Sigmoid colon (tissue), 7 donors: ENCODE measurements at regions of chr16 and their contacts with region 1.

Region 1: GRCh38 chr16:30355144-30355894 is at the start of gene CD2BP2:
- DNase-seq: peak; percentile 99
- H3K4me3 ChIP-seq: peak within 1 kb of the TSS; percentile 59 to 96 (median 81)
- H3K27ac ChIP-seq: peak within 1 kb of the TSS; percentile 93 to 99 (median 96)
- H3K4me1 ChIP-seq: peaks cover 0 to 58% (median 50%) of the 10 kb centered on the region in 4 donors
- H3K27me3 ChIP-seq: no peaks in the 10 kb centered on the region
- CTCF ChIP-seq: no peak
- EP300 ChIP-seq: peak in 2 of 4 donors; percentile 23 to 30
- POLR2A ChIP-seq: peak in 1 of 2 donors; percentile 27
- total RNA-seq, gene CD2BP2: 29.9 to 57.3 (median 43.0) TPM

Region 2: GRCh38 chr16:30335598-30336474 is 19.5 kb before region 1 on chr16:
- intact Hi-C with region 1: loop called (anchors 1 kb)
- DNase-seq: peak; percentile 70
- H3K4me3 ChIP-seq: peak overlapping the region; percentile 69 to 98 (median 72)
- H3K27ac ChIP-seq: peak overlapping the region; percentile 94 to 99 (median 96)
- H3K4me1 ChIP-seq: peaks cover 0 to 7% (median 6%) of the 10 kb centered on the region in 4 donors
- H3K27me3 ChIP-seq: no peaks in the 10 kb centered on the region
- CTCF ChIP-seq: no peak
- EP300 ChIP-seq: no peak
- POLR2A ChIP-seq: no peak

Region 3: GRCh38 chr16:30370444-30371247 is 15.3 kb after region 1 on chr16 and contains the start of gene TBC1D10B:
- intact Hi-C with region 1: loop called (anchors 1 kb)
- DNase-seq: peak; percentile 100
- H3K4me3 ChIP-seq: peak within 1 kb of the TSS; percentile 62 to 99 (median 96)
- H3K27ac ChIP-seq: peak within 1 kb of the TSS; percentile 85 to 94 (median 90)
- H3K4me1 ChIP-seq: peaks cover 0 to 49% (median 42%) of the 10 kb centered on the region in 4 donors
- H3K27me3 ChIP-seq: no peaks in the 10 kb centered on the region
- CTCF ChIP-seq: no peak
- EP300 ChIP-seq: no peak
- POLR2A ChIP-seq: peak in 1 of 2 donors; percentile 20
- total RNA-seq, gene TBC1D10B: 14.5 to 25.2 (median 19.2) TPM

Region 4: DNA sequence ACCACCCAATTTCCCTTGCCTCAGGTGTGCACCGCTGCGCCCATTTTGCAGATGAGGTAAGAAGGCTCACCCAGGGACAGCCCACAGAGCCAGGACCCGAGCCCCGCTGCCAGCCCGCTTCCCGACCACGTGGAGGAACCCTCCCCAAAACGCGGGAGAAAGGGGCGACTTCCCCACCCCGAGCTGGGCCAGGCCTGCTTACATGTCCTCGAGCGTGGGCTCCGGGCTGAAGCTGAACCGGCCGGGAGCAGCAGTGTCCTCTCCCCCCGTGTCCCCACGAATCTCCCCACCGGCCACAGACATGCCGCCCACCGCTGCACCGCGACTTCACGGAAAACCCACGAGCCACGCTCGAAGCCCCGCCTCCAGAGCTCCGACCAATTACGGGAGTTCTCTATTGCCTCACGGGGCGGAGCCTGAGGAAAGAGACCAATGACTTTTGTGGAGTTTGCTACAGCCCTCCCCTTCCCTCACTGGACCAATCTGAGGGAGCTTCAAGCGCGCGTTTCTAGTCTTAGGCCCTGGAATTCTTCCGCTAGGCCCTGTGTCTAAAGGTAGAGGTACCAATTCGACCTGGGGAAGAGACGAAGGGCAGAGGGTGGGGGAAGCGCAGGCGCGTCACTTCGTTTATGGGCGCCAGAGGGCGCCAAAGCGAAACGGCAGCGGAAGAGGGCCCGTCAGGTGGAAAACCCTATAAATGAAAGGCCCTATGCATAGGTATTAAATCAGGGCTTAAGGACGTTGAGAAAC is 74.5 kb after region 1 on chr16 and contains the start of gene DCTPP1:
- intact Hi-C with region 1: no loop called
- DNase-seq: peak; percentile 98
- H3K4me3 ChIP-seq: peak within 1 kb of the TSS; percentile 46 to 74 (median 56)
- H3K27ac ChIP-seq: peak within 1 kb of the TSS; percentile 79 to 84 (median 82)
- H3K4me1 ChIP-seq: peaks cover 0 to 21% (median 16%) of the 10 kb centered on the region in 4 donors
- H3K27me3 ChIP-seq: no peaks in the 10 kb centered on the region
- CTCF ChIP-seq: peak; percentile 60 to 82 (median 62)
- EP300 ChIP-seq: no peak
- POLR2A ChIP-seq: no peak
- total RNA-seq, gene DCTPP1: 10.5 to 19.9 (median 16.5) TPM